ENCODE measurements at regions of chr20 and their contacts with region 1.

Region 1: GRCh38 chr20:44115762-44116644 is 71.0 kb downstream of the JPH2 start:
- DNase-seq: no peak
- H3K4me3 ChIP-seq: no peak overlapping the region
- CTCF ChIP-seq: no peak

Region 2: DNA sequence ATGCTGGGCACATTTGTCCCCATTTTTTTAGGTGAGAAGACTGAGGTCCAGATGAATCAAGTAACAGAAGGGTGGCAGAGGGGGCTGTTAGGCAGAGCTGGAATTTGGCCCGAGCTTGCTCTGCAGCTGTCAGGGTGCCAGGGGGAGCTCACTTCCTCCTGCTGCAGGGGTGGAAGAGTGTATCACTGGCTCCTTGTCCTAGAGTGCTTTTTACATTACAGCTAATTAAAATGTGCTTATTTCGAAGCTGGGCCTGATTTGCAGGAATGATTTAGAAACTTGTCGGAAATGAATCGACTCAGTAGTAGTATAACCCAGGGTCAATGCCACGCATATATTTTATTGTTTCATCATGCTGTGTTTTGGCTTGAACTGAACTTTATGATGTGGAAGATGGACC is 190.2 kb before region 1 on chr20:
- CTCF ChIA-PET with region 1: no interaction called
- POLR2A ChIA-PET with region 1: no interaction called
- DNase-seq: no peak
- H3K4me3 ChIP-seq: no peak overlapping the region
- CTCF ChIP-seq: no peak

Region 3: DNA sequence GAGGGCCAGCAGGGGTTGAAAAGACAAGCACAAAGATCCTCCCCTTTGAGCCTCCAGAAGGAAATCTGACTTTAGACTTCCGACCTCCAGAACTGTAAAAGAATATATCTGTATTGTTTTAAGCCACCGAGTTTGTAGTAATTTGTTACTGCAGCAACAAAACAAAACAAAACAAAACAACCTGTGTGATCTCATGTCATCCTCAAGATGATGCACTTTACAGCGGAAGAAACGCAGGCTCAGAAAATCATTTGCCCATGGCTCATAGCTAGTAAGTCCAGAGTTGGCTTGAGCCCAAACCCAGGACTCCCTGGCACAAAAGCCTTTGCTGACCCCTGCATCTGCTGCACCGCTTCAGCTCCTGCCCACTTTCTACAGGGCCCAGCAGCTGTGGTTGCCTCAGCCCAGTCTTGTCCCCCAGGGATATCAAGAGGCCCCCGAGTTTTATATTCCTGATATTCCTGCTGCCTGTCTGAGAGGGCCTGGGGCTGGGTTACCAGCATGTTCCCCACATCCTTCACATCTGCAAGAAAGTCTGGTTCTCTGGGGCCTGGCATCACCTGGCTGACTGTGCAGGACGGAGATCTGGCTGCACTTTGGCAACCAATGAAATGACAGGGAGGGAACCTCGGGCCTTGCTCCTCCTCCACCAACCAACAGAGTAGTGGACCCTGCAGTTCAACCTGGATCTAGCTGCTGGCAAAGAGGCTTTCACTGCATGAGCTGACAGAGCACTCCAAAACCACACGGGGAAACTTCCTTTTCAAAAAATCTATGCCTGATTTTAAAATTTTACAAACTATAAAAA is 14.1 kb after region 1 on chr20:
- CTCF ChIA-PET with region 1: interaction called, 80 read pairs
- POLR2A ChIA-PET with region 1: no interaction called
- DNase-seq: no peak
- H3K4me3 ChIP-seq: no peak overlapping the region
- CTCF ChIP-seq: no peak

Region 4: DNA sequence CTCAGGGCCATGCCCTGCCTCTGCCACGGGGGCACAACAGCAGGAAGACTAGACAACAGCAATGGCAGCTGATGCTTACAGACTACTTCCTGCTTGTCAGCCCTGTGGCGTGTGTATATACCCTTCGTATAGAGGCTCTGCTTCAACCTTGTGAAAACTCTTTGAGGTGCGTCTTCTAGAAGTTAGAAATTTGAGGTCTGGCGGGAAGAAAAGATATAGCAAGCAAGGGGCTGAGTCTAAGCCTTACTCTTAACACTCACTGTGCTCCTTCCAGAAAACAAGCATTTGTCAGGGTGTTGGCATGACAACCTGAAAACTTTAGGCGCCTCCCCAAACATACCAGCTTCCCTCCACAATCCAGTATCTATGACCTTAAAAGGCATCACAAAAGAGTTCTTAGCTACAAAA is 37.6 kb after region 1 on chr20:
- CTCF ChIA-PET with region 1: interaction called, 19 read pairs
- POLR2A ChIA-PET with region 1: no interaction called
- DNase-seq: peak; percentile 16
- H3K4me3 ChIP-seq: no peak overlapping the region
- CTCF ChIP-seq: no peak

Region 5: DNA sequence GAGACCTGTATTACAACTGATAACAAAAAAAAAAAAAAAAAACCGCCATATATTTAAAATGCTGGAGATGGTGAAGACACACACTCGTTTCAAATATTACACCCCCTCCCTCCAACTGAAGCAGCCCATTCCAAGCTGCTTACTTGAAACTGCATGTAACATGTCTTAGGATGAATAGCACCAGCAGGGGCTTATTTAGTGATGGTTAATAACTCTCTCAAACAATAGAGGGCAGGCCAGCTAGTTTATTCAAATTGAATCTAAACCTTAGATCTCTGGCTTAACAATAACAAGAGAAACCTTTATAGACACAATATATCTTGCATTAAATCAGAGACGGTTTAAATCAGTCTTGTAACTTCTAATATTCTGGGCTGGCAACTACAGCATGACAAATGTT is 80.3 kb after region 1 on chr20:
- CTCF ChIA-PET with region 1: interaction called, 820 read pairs
- POLR2A ChIA-PET with region 1: no interaction called
- DNase-seq: no peak
- H3K4me3 ChIP-seq: no peak overlapping the region
- CTCF ChIP-seq: no peak

Region 6: GRCh38 chr20:44217342-44218092 is 101.5 kb after region 1 on chr20:
- CTCF ChIA-PET with region 1: interaction called, 58 read pairs
- POLR2A ChIA-PET with region 1: no interaction called
- DNase-seq: no peak
- H3K4me3 ChIP-seq: no peak overlapping the region
- CTCF ChIP-seq: peak; percentile 85

Measured in AG04449 (cell line).